Activated CD8-positive, alpha-beta T cell treated with anti-CD3 and anti-CD28 coated beads for 36 hours (primary cell): ENCODE measurements at regions of chr19 and their contacts with region 1.

Region 1: GRCh38 chr19:28633319-28634018 is 579.5 kb downstream of the UQCRFS1 start:
- DNase-seq: peak; percentile 70
- ATAC-seq: peak; percentile 92
- H3K4me3 Mint-ChIP-seq: no peak overlapping the region
- H3K27ac Mint-ChIP-seq: no peak overlapping the region
- H3K4me1 Mint-ChIP-seq: peaks cover 16% of the 10 kb centered on the region
- H3K27me3 Mint-ChIP-seq: no peaks in the 10 kb centered on the region
- CTCF ChIP-seq: peak; percentile 93

Region 2: GRCh38 chr19:28324275-28325060 is 309.0 kb before region 1 on chr19:
- CTCF ChIA-PET with region 1: interaction called, 12 read pairs
- POLR2A ChIA-PET with region 1: no interaction called
- intact Hi-C with region 1: no loop called
- DNase-seq: no peak
- ATAC-seq: no peak
- H3K4me3 Mint-ChIP-seq: no peak overlapping the region
- H3K27ac Mint-ChIP-seq: no peak overlapping the region
- H3K4me1 Mint-ChIP-seq: no peaks in the 10 kb centered on the region
- H3K27me3 Mint-ChIP-seq: no peaks in the 10 kb centered on the region
- CTCF ChIP-seq: no peak

Region 3: DNA sequence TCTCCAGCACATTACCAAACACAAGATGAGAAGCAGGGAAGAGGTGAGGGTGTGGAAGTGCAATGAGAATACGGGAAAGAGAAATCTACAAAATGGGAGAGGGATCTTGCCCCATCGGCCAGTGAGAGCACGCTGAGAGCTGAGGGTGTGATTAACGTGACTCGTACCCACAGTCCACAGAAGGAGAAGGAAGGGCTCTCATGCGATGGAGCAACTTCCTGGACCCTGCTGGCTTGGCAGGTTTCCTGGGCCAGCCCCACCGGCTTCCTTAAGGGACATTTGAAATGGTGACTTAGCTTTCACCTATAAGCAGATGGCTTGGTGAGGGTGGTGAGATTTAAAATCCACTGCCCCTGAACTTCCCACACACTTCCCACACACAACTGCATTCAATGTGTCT is 160.6 kb before region 1 on chr19:
- CTCF ChIA-PET with region 1: interaction called, 40 read pairs
- POLR2A ChIA-PET with region 1: no interaction called
- intact Hi-C with region 1: no loop called
- DNase-seq: no peak
- ATAC-seq: no peak
- H3K4me3 Mint-ChIP-seq: no peak overlapping the region
- H3K27ac Mint-ChIP-seq: no peak overlapping the region
- H3K4me1 Mint-ChIP-seq: peaks cover 20% of the 10 kb centered on the region
- H3K27me3 Mint-ChIP-seq: no peaks in the 10 kb centered on the region
- CTCF ChIP-seq: no peak

Region 4: GRCh38 chr19:28644169-28644775 is 10.8 kb after region 1 on chr19:
- CTCF ChIA-PET with region 1: interaction called, 18 read pairs
- POLR2A ChIA-PET with region 1: no interaction called
- intact Hi-C with region 1: no loop called
- DNase-seq: no peak
- ATAC-seq: no peak
- H3K4me3 Mint-ChIP-seq: no peak overlapping the region
- H3K27ac Mint-ChIP-seq: no peak overlapping the region
- H3K4me1 Mint-ChIP-seq: no peaks in the 10 kb centered on the region
- H3K27me3 Mint-ChIP-seq: no peaks in the 10 kb centered on the region
- CTCF ChIP-seq: no peak

Region 5: DNA sequence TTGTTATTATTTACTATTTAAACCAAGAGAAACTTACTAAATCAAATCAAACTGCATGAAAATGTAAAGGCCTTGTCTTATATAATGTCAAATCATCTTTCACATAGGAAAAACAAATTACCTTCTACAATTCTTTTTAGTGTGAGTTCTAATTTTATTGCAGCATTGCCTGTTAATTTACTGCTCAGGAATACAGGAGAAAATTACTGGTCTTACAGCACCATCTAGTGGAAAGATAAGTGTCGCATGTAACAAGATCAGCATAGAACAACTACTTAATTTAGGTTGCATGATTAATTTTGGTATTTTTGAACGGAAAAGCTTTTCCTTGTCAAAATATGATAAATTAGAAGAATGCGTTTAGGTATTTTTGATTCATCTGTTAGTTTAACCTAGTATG is 76.8 kb after region 1 on chr19:
- CTCF ChIA-PET with region 1: interaction called, 10 read pairs
- POLR2A ChIA-PET with region 1: no interaction called
- intact Hi-C with region 1: no loop called
- DNase-seq: no peak
- ATAC-seq: no peak
- H3K4me3 Mint-ChIP-seq: no peak overlapping the region
- H3K27ac Mint-ChIP-seq: no peak overlapping the region
- H3K4me1 Mint-ChIP-seq: no peaks in the 10 kb centered on the region
- H3K27me3 Mint-ChIP-seq: peaks cover 2% of the 10 kb centered on the region
- CTCF ChIP-seq: peak; percentile 70

Region 6: DNA sequence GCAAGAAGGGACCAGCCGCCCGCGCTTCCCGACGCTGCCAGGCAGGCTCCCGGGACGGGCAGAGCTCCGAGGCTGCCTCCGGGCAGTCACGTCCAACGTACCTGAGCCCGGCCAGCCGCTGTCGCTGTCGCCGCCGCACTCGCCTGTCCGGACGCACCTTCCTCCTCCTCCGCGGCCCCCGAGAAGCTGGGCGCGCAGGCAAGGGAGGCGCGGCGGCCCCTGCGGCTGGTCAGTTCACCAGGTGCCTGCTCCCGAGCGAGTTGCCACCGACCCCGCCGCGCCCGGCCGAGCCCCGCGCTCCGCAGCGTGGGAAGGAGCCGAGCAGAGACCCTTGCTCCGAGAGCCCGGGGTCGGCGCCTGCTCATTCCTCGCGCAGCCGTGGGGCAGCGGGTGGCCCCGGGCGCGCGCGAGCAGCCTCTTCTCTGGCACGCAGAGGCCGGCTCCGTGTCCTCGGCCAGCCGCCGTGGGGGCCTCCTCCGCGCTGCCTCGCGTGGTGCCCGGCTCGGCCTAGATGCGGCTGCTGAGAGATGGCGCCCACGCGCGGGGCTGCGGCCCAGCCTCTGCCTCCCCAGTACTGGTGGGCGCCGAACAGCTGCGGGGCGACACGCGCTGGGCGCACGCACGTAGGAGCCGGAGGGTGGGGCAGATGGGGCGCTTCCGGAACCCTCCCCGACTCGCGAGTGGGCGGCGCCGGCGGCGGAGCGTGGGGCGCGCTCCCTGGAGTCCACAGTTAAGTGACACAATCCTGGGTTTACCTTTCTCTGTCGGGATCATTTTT is 160.1 kb after region 1 on chr19:
- CTCF ChIA-PET with region 1: no interaction called
- POLR2A ChIA-PET with region 1: no interaction called
- intact Hi-C with region 1: no loop called
- DNase-seq: no peak
- ATAC-seq: no peak
- H3K4me3 Mint-ChIP-seq: no peak overlapping the region
- H3K27ac Mint-ChIP-seq: no peak overlapping the region
- H3K4me1 Mint-ChIP-seq: peaks cover 1% of the 10 kb centered on the region
- H3K27me3 Mint-ChIP-seq: peaks cover 29% of the 10 kb centered on the region
- CTCF ChIP-seq: no peak